Heart right ventricle (tissue), 16 donors: ENCODE measurements at regions of chr17 and their contacts with region 1.

Region 1: DNA sequence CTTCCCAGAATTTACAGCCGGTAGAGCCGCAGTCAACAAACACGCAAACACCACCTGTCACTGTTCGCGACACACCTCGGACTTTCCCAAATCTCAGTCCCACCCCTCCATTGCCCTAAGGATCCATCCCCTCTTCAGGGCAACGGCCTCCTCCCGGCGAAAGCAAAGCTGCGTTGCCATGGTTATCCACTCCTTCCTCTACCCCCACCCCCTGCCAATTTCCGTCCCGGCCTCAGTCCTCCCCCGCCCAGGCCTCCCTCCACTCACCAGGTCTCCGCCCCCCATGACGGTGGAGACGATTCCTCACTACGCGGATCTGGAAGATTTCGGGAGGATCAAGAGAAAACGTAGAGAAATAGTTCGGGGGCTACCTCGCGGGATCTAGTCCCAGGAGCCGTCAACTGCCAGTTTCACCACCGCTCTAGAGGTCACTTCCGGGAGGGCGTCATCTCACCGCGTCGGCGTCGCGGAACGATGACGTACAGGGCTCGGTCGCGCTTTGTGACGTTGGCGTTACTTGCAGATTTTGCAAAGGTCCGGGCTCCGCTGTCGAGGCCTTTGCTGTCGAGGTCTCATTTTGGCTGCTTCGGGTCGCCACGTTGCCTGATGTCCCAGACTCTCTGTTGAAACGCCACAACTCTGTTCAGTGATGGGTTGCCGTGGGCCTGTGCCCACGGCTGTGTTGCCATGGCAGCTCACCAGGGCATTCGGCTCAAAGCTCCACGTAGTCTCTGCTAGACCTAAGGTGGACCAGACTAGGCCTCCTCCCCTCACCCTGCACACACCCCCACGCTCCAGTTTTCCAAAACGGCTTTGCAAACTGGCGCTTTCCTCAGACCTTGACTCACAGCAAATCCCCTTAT is at the start of gene CWC25:
- DNase-seq: peak; percentile 93 to 95
- ATAC-seq: peak; percentile 93 to 97 (median 95)
- H3K4me3 ChIP-seq: peak within 1 kb of the TSS; percentile 73 to 94 (median 85)
- H3K27ac ChIP-seq: peak within 1 kb of the TSS; percentile 96 to 99 (median 99)
- H3K4me1 ChIP-seq: peaks cover 4 to 26% (median 21%) of the 10 kb centered on the region in 9 donors
- H3K27me3 ChIP-seq: no peaks in the 10 kb centered on the region
- CTCF ChIP-seq: no peak
- total RNA-seq, gene CWC25: 7.7 to 11.2 (median 9.0) TPM

Region 2: GRCh38 chr17:38584350-38584925 is 240.7 kb before region 1 on chr17:
- intact Hi-C with region 1: loop called in 1 of 10 experiments (anchors 5 kb)
- DNase-seq: peak in 1 of 2 donors; percentile 53
- ATAC-seq: peak; percentile 67 to 88 (median 78)
- H3K4me3 ChIP-seq: no peak overlapping the region
- H3K27ac ChIP-seq: no peak overlapping the region
- H3K4me1 ChIP-seq: peaks cover 0 to 11% (median 4%) of the 10 kb centered on the region in 9 donors
- H3K27me3 ChIP-seq: peaks cover 0 to 99% (median 63%) of the 10 kb centered on the region in 7 donors
- CTCF ChIP-seq: peak; percentile 69 to 97 (median 92)

Region 3: DNA sequence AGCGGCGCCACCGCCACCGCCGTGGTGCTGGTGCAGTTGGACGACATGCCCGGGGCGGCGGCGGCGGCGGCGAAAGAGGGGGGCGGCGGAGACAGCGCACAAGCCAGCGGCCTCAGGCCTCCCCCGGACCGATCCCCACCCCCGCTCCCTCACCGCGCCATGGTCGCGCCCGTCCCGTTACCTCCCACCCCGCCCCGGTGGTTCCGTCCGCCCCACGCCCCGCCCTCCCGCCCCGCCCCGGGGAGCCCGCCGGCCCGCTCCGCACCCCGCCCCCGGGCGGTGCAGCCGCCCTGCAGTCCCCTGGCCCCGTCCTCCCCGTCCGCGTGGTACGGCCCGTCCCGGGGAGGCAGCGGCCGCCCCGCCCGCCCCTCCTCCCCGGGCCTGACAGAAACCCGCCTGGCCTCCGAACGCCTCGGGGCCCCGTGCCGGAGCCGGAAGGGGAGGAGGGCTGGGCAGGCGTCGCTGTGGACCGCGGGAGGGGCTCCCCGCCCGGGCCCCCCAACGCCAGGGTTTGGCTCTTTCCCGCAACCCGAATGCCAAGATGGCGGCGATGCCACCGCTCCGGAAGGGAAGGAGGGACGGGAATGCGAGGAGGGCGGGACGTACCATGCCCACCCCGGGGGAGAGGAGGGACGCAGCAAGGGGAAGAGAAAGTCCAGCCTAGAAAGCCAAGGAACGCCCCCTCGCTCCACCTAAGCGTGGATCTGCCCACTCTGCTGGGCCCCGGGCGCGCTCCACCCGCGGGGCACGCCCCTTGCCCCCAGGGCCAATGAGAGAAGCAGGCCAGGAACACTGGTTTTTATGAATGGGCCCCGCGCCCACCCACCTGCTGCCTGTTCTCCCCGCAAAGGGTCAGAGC is 25.5 kb before region 1 on chr17 and contains the start of gene PIP4K2B:
- intact Hi-C with region 1: loop called in 1 of 10 experiments (anchors 2 kb)
- DNase-seq: peak; percentile 95 to 97
- ATAC-seq: peak; percentile 95 to 98 (median 95)
- H3K4me3 ChIP-seq: peak within 1 kb of the TSS; percentile 76 to 99 (median 94)
- H3K27ac ChIP-seq: peak within 1 kb of the TSS; percentile 98 to 100 (median 100)
- H3K4me1 ChIP-seq: peaks cover 7 to 42% (median 34%) of the 10 kb centered on the region in 9 donors
- H3K27me3 ChIP-seq: no peaks in the 10 kb centered on the region
- CTCF ChIP-seq: peak in 1 of 9 donors; percentile 23
- total RNA-seq, gene PIP4K2B: 37.9 to 51.9 (median 47.5) TPM

Region 4: DNA sequence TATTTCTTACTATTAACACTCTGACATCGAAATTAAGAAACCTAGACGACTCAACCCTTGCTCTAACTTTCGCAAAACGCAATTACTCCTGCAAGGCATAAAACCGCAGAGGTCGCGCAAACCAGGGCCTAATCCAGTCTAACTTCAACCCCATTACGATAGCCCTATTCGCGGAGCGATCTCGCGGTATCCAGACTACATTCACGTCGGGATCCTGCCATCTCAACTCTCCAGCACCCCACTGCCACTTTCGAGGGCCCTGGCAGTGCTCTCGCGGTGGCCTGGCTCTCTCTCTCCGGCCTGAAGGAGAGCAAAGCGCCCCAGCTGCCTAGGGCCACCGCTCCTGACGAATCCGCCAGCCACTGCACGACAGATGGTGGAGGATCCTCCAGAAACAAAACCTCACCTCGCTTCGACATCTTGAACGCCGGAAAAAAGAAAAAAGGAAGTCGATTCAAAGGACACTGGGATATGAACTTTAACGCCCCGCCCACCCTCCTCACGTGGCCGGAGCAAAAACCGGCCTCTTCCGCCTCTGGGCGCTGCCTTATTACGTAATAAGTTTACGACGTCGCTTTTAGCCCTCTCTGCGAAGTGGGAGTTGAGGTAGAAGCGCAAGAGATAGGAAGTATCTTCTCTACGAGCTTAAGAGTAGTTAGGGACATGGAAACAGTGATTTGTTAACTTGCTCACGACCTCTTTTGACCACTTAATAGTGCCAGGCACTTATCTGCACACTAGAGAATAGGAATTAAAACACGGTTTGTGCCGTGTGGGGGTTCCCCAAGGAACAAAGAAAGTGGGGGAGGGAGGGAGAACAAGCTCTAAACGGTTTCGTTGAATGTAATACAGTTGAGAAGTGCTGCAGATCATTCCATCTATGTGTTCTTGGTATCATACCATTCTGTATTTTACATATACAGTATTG is 28.4 kb after region 1 on chr17 and contains the start of gene RPL23:
- intact Hi-C with region 1: loop called in 5 of 10 experiments (anchors 1 to 2 kb)
- DNase-seq: peak; percentile 90 to 98
- ATAC-seq: peak; percentile 95 to 99 (median 98)
- H3K4me3 ChIP-seq: peak within 1 kb of the TSS; percentile 48 to 83 (median 67)
- H3K27ac ChIP-seq: peak within 1 kb of the TSS; percentile 81 to 98 (median 92)
- H3K4me1 ChIP-seq: peaks cover 12 to 43% (median 32%) of the 10 kb centered on the region in 9 donors
- H3K27me3 ChIP-seq: no peaks in the 10 kb centered on the region
- CTCF ChIP-seq: no peak
- total RNA-seq, gene RPL23: 725 to 991 (median 835) TPM

Region 5: DNA sequence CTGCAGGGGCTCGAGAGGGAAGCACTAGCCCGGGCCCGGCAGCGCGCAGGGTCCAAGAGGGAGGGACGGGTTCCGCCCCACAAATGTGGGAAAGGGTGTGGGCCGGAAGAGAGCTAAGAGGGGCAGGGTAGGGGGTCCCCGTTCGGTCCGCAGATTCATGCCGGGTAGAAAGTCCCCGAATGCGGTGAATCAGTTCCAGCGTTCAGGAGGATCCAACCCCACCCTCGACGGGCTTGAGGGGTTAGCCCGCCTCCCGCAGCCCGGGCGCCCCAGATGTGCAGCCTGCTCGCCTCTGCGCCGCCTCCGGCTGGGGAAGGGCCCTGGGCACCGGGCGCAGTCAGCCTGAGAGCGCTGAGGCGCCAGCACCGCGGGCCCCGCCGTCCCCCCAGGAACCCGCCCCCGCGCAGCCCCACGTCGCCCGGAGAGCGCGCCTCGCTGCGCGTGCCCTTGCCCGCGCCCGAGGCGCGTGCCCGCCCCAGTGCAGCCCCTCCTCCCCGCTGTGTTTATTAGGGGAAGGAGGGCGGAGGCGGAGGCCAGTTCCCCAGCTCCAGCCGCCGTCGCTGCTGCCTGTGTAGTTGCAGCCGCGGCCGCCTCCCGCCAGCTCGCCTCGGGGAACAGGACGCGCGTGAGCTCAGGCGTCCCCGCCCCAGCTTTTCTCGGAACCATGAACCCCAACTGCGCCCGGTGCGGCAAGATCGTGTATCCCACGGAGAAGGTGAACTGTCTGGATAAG is 44.6 kb after region 1 on chr17 and contains the start of gene LASP1:
- intact Hi-C with region 1: no loop called
- DNase-seq: peak; percentile 90
- ATAC-seq: peak; percentile 83 to 91 (median 87)
- H3K4me3 ChIP-seq: peak within 1 kb of the TSS; percentile 75 to 99 (median 94)
- H3K27ac ChIP-seq: peak within 1 kb of the TSS; percentile 85 to 99 (median 95)
- H3K4me1 ChIP-seq: peaks cover 21 to 57% (median 49%) of the 10 kb centered on the region in 9 donors
- H3K27me3 ChIP-seq: no peaks in the 10 kb centered on the region
- CTCF ChIP-seq: no peak
- total RNA-seq, gene LASP1: 19.5 to 56.9 (median 23.0) TPM

Region 6: DNA sequence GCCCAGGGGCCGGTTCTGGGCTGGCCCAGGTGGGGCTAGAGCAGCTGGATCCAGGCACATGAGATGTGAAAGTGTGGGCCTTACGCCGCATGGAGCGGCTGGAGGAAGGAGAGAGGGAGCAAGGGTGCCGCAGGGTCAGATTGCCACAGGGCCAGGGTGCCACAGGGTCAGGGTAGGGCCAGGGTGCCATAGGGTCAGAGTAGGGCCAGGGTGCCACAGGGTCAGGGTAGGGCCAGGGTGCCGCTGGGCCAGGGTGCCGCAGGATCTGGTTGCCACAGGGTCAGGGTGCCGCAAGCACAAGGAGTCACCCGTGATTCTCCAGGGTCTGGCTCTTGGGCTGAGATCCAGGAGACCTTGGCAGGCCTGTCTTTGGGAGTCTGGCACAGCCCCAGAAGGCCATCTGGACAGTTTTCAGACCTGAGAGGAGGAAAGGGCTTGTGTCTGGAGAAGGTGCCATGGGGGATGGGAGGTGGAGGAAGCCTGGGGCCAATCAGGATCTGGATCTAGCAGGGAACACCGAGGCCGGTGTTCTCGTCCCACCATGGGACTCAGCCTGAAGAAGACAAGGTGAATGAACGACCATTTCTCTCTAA is 87.2 kb after region 1 on chr17:
- intact Hi-C with region 1: loop called in 1 of 10 experiments (anchors 10 kb)
- DNase-seq: peak; percentile 67 to 74
- ATAC-seq: peak; percentile 26 to 71 (median 42)
- H3K4me3 ChIP-seq: no peak overlapping the region
- H3K27ac ChIP-seq: peak overlapping the region in 9 of 10 donors; percentile 18 to 68 (median 45)
- H3K4me1 ChIP-seq: peaks cover 27 to 74% (median 49%) of the 10 kb centered on the region in 9 donors
- H3K27me3 ChIP-seq: no peaks in the 10 kb centered on the region
- CTCF ChIP-seq: no peak